Activated naive CD4-positive, alpha-beta T cell treated with anti-CD3 and anti-CD28 coated beads for 36 hours (primary cell): ENCODE measurements at regions of chr10 and their contacts with region 1.

Region 1: DNA sequence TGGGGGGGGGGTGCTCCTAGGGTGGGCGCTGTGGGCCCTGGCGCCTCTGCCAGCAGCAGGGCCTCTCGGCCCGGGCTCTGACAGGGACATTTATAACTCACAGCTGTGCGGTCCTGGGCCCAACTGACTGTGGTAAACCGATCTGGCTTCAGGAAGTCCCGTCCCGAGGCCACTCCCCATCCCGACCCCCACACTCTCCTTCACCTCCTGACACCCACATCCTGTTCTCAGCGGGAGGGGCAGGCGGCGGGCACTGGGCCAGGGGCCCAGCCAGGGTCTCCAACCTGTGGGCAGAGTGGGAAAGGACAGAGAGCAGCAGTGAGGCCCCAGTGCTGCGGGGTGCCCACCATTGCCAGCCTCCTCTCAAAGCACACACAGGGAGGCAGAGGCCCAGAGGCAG is 69.1 kb downstream of the ZMIZ1 start:
- DNase-seq: peak; percentile 73
- H3K4me3 Mint-ChIP-seq: peak overlapping the region; percentile 41
- H3K27ac Mint-ChIP-seq: no peak overlapping the region
- H3K4me1 Mint-ChIP-seq: peaks cover 26% of the 10 kb centered on the region
- H3K27me3 Mint-ChIP-seq: no peaks in the 10 kb centered on the region

Region 2: DNA sequence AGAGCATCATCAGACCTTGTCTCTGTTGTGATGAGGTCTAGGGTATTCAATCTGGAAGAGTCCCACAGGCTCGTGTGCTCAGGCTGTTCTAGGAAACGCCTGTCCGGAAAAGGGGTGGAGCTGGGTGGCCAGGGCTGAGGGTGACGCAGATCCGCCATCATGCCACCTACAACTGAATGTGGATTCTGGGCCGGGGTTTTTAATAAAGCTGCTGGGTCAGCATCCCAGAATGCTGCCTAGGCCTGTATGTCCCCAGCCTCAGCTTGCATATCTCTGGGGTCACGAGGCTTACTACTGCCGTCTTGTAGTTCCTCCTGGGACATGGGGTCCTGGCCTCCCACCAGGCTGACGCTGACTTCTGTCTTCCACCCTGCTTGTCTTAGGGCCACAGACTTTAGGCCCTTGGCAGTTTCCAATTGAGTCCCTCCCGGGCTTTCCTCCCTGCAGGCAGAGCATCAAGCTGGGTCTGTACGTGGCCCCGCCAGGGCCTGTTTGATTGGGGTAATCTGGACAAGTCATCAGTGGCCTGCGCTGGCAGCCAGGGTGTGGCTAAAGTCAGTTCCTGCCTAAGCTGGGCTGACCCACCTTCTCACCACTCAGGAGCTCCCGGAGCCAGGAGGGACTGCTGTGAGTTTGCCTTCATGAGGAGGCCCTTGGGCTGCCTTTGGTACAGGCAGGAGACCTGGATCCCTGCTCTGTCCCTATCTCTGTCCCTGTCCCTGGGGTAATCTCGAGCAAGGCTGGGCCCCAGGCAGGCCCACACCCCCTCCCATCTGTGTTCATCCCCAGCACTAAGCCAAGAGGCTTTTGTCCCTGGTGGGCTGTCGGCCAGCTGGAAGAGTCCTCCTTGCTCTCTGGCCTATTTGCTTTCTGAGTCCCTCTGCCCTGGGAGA is 10.9 kb after region 1 on chr10:
- CTCF ChIA-PET with region 1: interaction called, 4 read pairs
- intact Hi-C with region 1: loop called (anchors 1 kb)
- DNase-seq: no peak
- H3K4me3 Mint-ChIP-seq: no peak overlapping the region
- H3K27ac Mint-ChIP-seq: no peak overlapping the region
- H3K4me1 Mint-ChIP-seq: peaks cover 54% of the 10 kb centered on the region
- H3K27me3 Mint-ChIP-seq: no peaks in the 10 kb centered on the region